ENCODE measurements at regions of chr2 and their contacts with region 1.

Region 1: GRCh38 chr2:101387151-101387807 is at the start of gene CREG2:
- DNase-seq: peak; percentile 70
- H3K4me3 Mint-ChIP-seq: peak within 1 kb of the TSS; percentile 52
- H3K27ac Mint-ChIP-seq: no peak within 1 kb of the TSS
- H3K4me1 Mint-ChIP-seq: peaks cover 11% of the 10 kb centered on the region
- H3K27me3 Mint-ChIP-seq: peaks cover 32% of the 10 kb centered on the region
- total RNA-seq, gene CREG2: not detected

Region 2: GRCh38 chr2:101160454-101160853 is 226.8 kb before region 1 on chr2:
- CTCF ChIA-PET with region 1: no interaction called
- POLR2A ChIA-PET with region 1: no interaction called
- intact Hi-C with region 1: no loop called
- DNase-seq: no peak
- H3K4me3 Mint-ChIP-seq: no peak overlapping the region
- H3K27ac Mint-ChIP-seq: no peak overlapping the region
- H3K4me1 Mint-ChIP-seq: no peaks in the 10 kb centered on the region
- H3K27me3 Mint-ChIP-seq: no peaks in the 10 kb centered on the region

Region 3: GRCh38 chr2:101361121-101361870 is 26.0 kb before region 1 on chr2:
- CTCF ChIA-PET with region 1: interaction called, 13 read pairs
- POLR2A ChIA-PET with region 1: no interaction called
- intact Hi-C with region 1: no loop called
- DNase-seq: peak; percentile 44
- H3K4me3 Mint-ChIP-seq: no peak overlapping the region
- H3K27ac Mint-ChIP-seq: no peak overlapping the region
- H3K4me1 Mint-ChIP-seq: peaks cover 30% of the 10 kb centered on the region
- H3K27me3 Mint-ChIP-seq: no peaks in the 10 kb centered on the region

Region 4: DNA sequence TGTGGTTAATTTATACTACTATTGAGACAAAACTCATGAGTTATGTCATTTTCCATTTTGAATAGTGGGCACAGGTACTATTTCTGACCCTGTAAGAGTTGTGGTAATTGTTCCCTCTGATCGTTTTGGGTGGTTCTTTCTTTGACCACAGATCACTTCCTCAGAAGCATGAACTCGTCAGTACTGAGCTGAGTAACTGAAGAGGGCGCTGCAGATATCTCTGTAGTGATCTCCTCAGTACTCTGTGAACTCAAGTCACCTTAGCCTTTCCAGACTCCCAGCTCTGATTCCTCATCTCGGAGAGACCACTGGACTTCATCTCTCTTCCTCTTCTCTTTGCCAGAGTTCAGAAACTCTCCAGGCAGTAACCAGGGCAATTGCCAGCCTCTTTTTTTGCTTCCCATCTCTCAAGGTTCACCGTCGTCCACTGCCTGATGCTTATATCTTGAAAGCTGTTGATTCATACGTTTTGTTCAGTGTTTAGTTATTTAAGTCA is 914.6 kb after region 1 on chr2:
- CTCF ChIA-PET with region 1: no interaction called
- POLR2A ChIA-PET with region 1: no interaction called
- intact Hi-C with region 1: no loop called
- DNase-seq: peak; percentile 65
- H3K4me3 Mint-ChIP-seq: peak overlapping the region; percentile 4
- H3K27ac Mint-ChIP-seq: peak overlapping the region; percentile 55
- H3K4me1 Mint-ChIP-seq: peaks cover 45% of the 10 kb centered on the region
- H3K27me3 Mint-ChIP-seq: peaks cover 4% of the 10 kb centered on the region

Measured in activated CD4-positive, alpha-beta memory T cell treated with anti-CD3 and anti-CD28 coated beads for 36 hours (primary cell).